GM10248 (cell line): ENCODE measurements at regions of chr7 and their contacts with region 1.

Region 1: GRCh38 chr7:32559480-32559879 is 64.2 kb downstream of the AVL9 start:
- DNase-seq: no peak
- CTCF ChIP-seq: no peak

Region 2: DNA sequence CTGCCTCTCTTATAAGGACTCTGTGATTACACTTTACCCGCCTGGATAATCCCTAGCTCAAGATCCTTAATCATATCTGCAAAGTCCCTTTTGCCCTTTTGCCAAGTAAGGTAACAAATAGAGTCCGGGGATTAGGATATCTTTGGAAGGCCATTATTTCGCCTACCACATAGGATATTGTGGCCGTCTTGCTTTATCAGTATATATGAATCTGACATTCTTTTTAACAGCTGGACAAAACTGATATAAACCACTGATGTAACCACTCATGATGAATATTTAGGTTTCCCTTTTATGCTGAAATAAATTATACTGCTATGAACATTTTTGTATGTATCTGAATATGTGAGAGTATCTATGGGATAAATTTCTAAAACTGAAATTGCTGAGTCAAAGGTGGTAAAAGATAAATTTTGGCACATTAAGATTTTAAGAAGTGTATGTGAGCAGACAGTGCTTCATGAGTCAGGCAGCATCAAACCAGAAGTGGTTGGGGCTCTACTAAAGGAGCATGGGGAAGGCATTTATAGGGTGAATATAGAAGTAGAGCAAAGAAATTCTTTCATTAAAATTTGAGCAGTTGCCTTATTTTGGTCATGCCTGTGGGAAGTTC is 19.5 kb before region 1 on chr7:
- CTCF ChIA-PET with region 1: interaction called, 11 read pairs
- POLR2A ChIA-PET with region 1: no interaction called
- DNase-seq: no peak
- CTCF ChIP-seq: no peak

Region 3: DNA sequence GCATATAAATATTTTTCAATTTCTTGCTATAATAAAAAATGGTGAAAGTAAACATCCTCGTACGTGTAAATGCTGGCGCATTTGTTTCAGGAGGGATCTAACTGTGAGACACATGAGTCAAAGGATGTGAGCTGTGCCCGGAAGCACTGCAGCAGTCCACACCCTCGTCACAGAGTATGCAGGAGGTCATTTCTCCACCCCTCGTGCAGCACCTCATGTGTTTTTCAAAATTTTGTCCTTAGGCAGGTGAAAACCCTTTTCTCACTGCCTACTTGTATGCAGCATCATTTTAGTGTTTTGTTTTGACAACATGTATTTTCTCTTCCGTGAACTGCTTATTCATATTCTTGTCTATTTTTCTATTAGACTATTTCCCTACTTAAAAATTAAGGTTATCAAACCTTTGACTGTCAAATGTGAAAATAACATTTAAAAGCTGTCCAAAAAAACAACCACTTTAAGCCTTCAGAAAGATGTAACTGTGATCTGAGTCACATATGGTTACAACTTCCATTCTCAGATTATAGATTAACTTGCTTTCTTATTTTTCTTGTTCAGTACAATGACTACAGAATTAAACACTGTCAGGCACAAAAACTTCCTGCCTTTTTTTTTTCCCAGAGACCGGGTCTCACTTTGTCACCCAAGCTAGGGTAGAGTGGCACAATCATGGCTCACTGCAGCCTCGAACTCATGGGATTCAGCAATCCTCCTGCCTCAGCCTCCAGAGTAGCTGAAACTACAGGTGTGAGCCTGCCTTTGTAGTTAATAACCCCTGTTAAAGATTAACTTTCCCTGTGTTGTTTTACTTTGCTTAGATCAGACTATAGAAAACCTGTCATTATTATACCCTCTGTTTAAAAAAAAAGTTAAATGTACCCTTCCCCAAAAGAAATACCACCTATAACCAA is 98.8 kb after region 1 on chr7:
- CTCF ChIA-PET with region 1: no interaction called
- POLR2A ChIA-PET with region 1: no interaction called
- DNase-seq: no peak
- CTCF ChIP-seq: no peak